ENCODE measurements at regions of chr16 and their contacts with region 1.

Region 1: DNA sequence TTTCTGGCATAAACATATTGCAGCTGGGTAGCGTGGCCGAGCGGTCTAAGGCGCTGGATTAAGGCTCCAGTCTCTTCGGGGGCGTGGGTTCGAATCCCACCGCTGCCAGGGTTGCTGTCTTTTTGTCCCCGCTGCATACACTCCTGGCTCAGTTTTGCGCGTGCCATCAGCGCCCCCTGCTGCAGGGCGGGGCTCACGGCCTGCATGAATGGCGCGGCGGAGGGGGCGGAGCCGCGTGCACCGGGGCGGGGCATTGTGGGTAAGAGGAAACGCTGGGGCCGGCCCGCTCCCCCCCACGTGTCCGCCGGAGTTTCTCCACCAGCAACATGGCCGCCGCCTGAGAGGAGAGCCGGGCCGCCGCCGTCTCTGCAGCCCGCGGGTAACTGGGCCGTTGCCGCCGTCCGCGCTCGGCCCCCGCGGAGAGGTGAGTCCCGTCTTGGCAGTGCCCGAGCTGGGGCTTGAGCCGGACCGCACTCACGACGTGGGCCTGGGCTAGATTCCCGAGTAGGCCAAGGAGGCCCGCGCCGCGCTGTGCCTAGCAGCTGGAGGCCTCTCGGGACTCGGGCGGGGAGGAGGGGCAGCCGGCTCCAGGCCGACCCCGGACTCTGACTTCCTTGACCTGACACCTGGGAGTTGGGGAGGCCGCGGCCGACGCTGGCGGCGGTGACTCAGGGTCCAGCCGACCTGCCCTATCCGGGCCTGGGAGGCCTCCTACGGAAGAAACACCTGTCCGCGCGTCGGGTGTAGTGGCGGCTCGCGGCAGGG is at the start of gene POLR3E:
- DNase-seq: peak; percentile 100
- H3K4me3 ChIP-seq: peak within 1 kb of the TSS; percentile 85 to 91
- H3K27ac ChIP-seq: peak within 1 kb of the TSS; percentile 89 to 90
- H3K4me1 ChIP-seq: peaks cover 0 to 27% (median 16%) of the 10 kb centered on the region in 4 donors
- H3K27me3 ChIP-seq: no peaks in the 10 kb centered on the region
- CTCF ChIP-seq: peak; percentile 95 to 99

Region 2: DNA sequence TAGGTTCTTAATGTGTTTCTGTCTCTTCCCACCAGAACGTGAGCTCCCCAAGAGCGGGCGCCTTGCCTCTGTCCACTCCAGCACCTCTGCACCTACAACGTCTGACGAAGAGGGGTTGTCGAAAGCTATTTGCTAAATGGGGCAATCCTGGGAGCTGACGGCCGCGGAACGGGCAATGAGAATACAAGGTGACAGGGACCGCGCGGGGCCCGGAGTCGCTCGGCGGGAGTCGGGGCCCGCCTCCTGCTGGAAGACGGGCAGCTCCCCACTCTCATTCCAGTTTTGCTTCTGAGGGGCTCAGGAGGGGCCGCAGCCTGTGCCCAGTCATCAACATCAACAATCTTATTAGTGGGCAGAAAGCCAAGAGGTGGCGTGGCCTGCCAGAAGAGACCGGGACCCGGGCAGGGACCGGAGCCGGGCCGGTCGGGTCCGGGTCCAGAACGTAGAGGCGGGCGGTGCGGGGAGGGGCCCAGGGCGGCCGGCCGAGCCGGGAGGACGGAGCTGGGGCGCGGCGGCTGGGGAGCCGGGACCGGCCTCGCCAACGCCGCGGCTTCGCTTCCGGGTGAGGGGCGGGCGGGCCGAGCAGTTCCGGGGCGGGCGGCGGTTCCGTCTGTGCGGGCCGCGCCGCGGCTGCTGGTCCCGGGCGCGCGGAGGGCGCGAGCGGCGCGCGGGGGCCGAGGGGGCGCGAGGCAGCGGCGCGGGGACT is 289.6 kb before region 1 on chr16 and contains the start of gene MOSMO:
- intact Hi-C with region 1: loop called (anchors 5 kb)
- DNase-seq: peak; percentile 65 to 82
- H3K4me3 ChIP-seq: peak within 1 kb of the TSS; percentile 94 to 99
- H3K27ac ChIP-seq: peak within 1 kb of the TSS; percentile 76 to 96
- H3K4me1 ChIP-seq: peaks cover 0 to 31% (median 15%) of the 10 kb centered on the region in 4 donors
- H3K27me3 ChIP-seq: no peaks in the 10 kb centered on the region
- CTCF ChIP-seq: no peak

Region 3: GRCh38 chr16:22081050-22081449 is 216.2 kb before region 1 on chr16:
- intact Hi-C with region 1: no loop called
- DNase-seq: no peak
- H3K4me3 ChIP-seq: no peak overlapping the region
- H3K27ac ChIP-seq: no peak overlapping the region
- H3K4me1 ChIP-seq: peaks cover 0 to 13% (median 0%) of the 10 kb centered on the region in 4 donors
- H3K27me3 ChIP-seq: no peaks in the 10 kb centered on the region
- CTCF ChIP-seq: no peak

Region 4: GRCh38 chr16:22141746-22142145 is 155.6 kb before region 1 on chr16:
- intact Hi-C with region 1: no loop called
- DNase-seq: no peak
- H3K4me3 ChIP-seq: no peak overlapping the region
- H3K27ac ChIP-seq: no peak overlapping the region
- H3K4me1 ChIP-seq: no peaks in the 10 kb centered on the region
- H3K27me3 ChIP-seq: peaks cover 0 to 13% of the 10 kb centered on the region in 2 donors
- CTCF ChIP-seq: no peak

Region 5: DNA sequence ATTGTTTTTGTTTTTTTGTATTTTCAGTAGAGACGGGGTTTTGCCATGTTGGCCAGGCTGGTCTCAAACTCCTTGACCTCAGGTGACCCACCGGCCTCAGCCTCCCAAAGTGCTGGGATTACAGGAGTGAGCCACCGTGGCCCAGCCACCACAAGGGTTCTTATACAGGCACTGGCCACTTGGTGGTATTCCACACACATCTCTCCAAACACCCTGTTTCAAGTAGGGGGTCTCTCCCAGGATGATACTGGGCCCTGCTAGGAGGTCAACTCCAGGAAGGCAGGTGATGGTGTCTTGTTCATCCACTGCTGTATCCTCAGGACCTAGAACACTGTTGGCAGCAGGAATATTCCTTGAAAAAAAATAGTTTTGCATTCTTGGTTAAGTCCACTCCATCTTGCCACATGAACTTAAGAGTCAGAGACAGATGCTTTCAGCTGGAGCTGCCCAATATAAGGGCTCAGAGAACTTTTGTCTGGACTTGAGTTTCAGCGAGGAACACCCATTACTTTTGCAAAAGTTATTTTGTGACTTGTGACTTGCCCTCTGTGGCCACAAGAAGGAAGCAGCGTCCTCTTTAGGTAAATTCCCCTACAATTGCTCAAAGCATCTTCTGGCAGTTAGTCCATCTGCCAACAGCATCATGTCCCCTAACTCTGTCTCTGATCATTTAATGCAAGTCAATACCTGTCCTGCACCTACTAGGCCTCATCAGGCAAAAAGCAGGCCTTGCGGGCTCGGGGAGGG is 98.6 kb before region 1 on chr16:
- intact Hi-C with region 1: loop called (anchors 2 kb)
- DNase-seq: no peak
- H3K4me3 ChIP-seq: no peak overlapping the region
- H3K27ac ChIP-seq: peak overlapping the region; percentile 82 to 92
- H3K4me1 ChIP-seq: peaks cover 0 to 32% (median 20%) of the 10 kb centered on the region in 4 donors
- H3K27me3 ChIP-seq: no peaks in the 10 kb centered on the region
- CTCF ChIP-seq: no peak

Region 6: DNA sequence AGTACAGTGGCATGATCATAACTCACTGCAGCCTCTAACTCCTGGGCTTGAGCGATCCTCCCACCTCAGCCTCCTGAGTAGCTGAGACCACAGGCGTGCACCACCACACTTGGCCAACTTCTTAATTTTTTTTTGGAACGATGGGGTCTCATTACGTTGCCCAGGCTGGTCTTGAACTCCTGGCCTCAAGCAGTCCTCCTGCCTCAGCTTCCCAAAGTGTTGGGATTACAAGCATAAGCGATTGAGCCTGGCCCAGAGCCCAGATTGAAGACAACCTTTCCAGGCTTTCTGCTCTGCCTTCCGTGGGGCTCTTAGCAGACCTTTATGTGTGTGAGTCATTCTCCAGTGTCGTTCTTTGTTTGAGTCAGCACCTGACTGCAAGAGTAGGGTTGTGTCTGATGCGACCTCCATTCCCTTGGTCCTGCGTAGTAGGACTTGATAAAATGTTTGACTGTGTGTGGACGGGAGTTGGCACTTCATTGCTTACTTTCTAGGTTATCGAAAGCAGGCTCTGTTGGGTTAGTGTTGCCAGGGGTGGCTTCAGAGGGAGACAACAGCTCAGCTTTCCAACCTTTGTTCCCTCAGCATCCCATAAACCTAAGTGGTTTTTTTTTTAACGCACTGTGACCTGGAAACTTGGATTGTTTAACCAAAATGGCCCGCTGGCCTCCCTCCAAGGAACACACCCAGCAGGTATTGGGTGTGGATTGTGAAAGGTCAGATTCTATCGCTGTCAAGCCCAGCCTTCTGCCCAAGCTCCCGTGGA is 64.8 kb before region 1 on chr16:
- intact Hi-C with region 1: loop called (anchors 10 kb)
- DNase-seq: no peak
- H3K4me3 ChIP-seq: no peak overlapping the region
- H3K27ac ChIP-seq: peak overlapping the region in 1 of 2 donors; percentile 38
- H3K4me1 ChIP-seq: peaks cover 0 to 28% (median 12%) of the 10 kb centered on the region in 4 donors
- H3K27me3 ChIP-seq: no peaks in the 10 kb centered on the region
- CTCF ChIP-seq: no peak